ENCODE measurements at regions of chr12 and their contacts with region 1.

Region 1: DNA sequence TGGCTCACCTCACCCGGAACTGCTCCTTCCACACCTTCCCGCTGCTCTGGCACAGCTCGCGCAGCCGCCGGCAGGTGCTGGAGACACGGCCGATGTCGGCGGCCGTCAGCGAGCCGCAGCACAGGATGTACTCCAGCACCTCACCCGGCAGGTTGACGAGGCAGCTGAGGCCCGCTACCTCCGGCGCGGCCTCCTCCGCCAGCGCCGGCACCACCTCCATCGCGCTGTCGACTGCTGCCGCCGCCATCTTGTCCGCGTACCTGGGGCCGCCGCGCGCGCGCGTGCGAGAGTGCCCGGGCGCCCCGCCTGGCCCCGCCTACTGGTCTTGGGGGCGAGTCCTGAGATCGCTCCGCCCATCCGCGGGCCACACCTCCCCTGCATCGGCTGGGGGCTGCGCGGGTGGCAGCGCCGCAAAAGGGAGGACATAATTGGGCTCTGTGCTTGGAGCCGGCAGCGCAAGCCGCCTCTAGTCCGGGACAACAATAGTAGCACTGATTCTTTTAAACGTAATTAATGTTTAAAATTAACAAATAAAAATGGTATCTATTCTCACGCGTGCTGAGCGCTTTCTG is at the start of gene FBXO21:
- DNase-seq: peak; percentile 91
- H3K4me3 Mint-ChIP-seq: peak within 1 kb of the TSS; percentile 90
- H3K27ac Mint-ChIP-seq: peak within 1 kb of the TSS; percentile 83
- H3K4me1 Mint-ChIP-seq: peaks cover 23% of the 10 kb centered on the region
- H3K27me3 Mint-ChIP-seq: no peaks in the 10 kb centered on the region
- total RNA-seq, gene FBXO21: 18.2 to 19.7 TPM

Region 2: DNA sequence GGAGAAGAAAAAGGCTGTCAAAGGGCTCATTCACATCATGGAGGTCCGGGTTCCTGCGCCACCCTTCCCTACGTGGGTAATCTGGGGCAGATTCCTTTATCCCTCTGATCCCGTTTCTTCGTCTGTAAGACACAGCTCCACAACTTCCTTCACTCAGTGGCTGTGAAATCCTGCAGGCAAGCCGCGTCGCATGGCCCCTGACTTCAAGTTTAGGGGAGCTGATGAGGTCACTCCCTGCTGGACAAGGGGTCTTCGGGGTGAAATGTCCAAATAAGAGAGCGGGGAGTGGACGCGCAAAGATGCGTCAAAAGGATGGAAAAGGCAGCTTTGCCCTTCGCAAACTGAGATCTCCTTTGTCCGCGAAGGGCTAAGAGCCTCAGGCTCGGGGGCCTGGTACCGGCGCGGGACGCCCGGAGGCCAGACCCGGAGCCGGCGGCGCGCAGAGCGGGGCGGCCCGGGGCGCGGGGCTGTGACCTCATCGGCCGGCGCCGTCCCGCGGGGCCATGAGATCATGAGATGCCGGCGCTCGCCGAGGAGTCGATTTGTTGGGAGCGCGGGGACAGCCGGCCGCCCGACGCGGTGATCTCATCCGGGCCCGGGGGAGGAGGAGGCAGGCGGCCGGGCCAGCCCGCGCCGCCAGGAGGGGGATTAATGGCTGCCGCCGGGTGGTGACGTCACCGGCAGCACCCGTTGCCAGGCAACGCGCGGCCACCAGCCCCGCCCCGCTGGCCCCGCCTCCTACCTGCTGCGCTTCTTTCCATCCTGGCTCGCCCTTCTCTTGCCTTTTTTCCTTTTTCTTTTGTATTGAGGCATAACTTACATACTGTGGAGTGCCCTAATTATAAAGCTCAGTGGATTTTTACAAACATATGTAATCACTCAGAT is 371.1 kb before region 1 on chr12:
- CTCF ChIA-PET with region 1: no interaction called
- intact Hi-C with region 1: loop called (anchors 2 kb)
- DNase-seq: peak; percentile 87
- H3K4me3 Mint-ChIP-seq: peak overlapping the region; percentile 95
- H3K27ac Mint-ChIP-seq: peak overlapping the region; percentile 91
- H3K4me1 Mint-ChIP-seq: peaks cover 11% of the 10 kb centered on the region
- H3K27me3 Mint-ChIP-seq: no peaks in the 10 kb centered on the region

Region 3: GRCh38 chr12:117155278-117156060 is 34.8 kb before region 1 on chr12:
- CTCF ChIA-PET with region 1: interaction called, 7 read pairs
- intact Hi-C with region 1: loop called (anchors 2 kb)
- DNase-seq: peak; percentile 81
- H3K4me3 Mint-ChIP-seq: no peak overlapping the region
- H3K27ac Mint-ChIP-seq: no peak overlapping the region
- H3K4me1 Mint-ChIP-seq: peaks cover 17% of the 10 kb centered on the region
- H3K27me3 Mint-ChIP-seq: no peaks in the 10 kb centered on the region

Region 4: GRCh38 chr12:117172168-117172567 is 18.1 kb before region 1 on chr12:
- CTCF ChIA-PET with region 1: no interaction called
- intact Hi-C with region 1: loop called (anchors 2 kb)
- DNase-seq: no peak
- H3K4me3 Mint-ChIP-seq: no peak overlapping the region
- H3K27ac Mint-ChIP-seq: no peak overlapping the region
- H3K4me1 Mint-ChIP-seq: peaks cover 8% of the 10 kb centered on the region
- H3K27me3 Mint-ChIP-seq: no peaks in the 10 kb centered on the region

Region 5: GRCh38 chr12:118135788-118136558 is 945.7 kb after region 1 on chr12 and contains the start of gene PEBP1:
- CTCF ChIA-PET with region 1: no interaction called
- intact Hi-C with region 1: loop called (anchors 1 kb)
- DNase-seq: peak; percentile 95
- H3K4me3 Mint-ChIP-seq: peak within 1 kb of the TSS; percentile 98
- H3K27ac Mint-ChIP-seq: peak within 1 kb of the TSS; percentile 83
- H3K4me1 Mint-ChIP-seq: peaks cover 31% of the 10 kb centered on the region
- H3K27me3 Mint-ChIP-seq: no peaks in the 10 kb centered on the region
- total RNA-seq, gene PEBP1: 117 to 120 TPM